ENCODE measurements at regions of chr2 and their contacts with region 1.

Region 1: DNA sequence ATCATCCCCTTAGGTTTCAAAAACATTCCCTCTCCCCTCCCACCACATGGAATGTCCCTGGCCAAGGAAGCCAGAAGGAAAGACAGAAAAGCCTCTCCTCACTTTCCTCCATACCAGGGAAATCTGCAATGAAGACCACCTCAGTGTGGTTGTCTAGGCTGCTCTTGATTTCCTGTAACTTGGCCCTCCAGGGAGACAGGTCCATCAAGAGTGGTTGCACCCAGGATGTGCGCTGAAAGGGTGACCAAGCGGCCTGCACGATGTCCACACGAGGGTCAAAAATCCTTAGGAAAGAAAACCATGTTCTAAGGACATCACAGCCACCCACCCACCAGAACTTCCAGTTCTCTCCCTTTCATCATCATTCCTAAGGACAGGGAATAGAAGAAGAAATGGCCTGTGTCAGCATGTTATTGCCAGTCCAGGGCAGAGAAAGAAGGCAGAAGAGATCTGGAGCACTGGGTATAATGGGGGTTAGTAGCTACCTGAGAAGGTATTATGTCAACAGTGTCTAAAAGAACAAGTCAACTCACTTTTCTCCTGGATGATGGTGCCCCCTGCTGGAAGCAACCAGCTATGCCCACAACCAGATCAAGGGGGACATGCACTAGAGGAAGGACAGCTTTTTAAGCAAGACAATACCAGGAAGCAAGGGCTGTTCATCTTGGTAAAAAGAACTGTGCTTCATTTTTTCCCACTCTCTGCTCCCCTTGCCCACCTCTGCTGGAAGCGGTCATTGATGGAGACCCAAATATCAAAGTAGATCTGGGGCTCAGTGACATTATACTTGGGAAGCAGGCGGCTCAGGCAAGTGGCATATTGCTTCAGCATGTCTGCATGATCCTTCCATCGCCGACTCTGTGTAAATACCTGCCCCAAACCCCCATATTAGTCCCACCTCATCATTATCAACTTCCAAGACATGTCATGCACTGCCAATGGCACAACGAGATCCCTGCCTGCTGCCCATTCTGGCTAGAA is 9.3 kb downstream of the GGCX start:
- DNase-seq: peak; percentile 78 to 92 (median 89)
- ATAC-seq: peak; percentile 91
- H3K4me3 ChIP-seq: no peak overlapping the region
- H3K4me1 ChIP-seq: no peaks in the 10 kb centered on the region
- CTCF ChIP-seq: peak; percentile 79

Region 2: DNA sequence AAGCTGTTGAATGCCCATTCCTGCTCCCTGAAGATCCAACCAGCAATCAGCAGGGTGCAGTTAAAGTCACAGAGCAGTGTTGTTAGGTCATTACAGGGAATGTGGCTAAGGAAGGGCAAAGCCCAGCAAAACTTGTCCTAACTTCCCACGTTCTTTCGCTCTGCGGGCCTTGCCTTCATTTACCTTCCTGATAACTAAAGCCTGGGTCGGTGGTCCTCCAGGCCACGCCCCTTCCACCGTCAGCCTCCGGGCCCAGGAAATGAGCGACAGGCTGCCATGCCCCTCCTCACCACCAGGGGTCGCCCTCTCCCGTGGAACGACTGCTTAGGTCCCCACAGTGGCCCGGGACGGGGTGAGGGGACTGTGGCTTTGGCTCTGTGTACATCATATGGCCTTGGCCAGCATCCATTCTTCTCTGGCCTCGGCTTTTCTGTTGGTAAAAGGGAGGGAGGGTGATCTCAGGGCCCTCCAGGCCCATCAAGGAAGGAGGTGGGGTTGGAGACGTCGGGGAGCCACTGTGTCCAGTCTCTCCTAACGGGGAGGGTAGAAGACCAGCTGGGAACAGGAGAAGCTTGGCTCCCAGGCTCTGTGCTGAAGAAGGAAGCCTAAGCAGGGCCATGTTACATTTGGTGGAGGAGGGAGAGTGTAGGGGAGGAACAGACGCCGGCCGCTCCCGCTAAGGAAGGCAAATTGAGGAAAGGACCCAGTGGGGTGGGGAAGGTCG is 131.3 kb before region 1 on chr2:
- intact Hi-C with region 1: loop called (anchors 1 to 5 kb)
- DNase-seq: peak; percentile 93 to 96 (median 94)
- ATAC-seq: peak; percentile 84
- H3K4me3 ChIP-seq: no peak overlapping the region
- H3K4me1 ChIP-seq: peaks cover 31% of the 10 kb centered on the region
- CTCF ChIP-seq: peak; percentile 99

Region 3: DNA sequence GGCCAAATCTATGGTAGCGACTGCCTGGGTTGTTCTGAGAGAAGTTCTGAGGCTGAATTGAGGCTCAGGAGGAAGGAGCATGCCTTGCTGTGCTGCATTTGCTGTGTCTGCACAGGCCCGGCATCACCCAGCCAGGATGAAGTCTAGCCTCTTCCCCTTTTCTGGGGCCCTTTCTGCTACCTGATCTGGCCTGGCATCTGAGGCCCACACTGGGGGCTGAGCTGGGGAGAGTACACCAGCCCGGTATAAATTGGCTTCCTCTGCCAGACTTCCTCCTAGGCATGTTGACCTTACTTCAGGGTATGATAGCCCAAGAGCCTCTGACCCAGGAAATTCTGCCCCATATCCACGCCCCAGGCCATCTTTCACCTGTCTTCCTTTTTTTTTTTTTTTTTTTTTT is 677.2 kb after region 1 on chr2:
- intact Hi-C with region 1: no loop called
- DNase-seq: no peak
- ATAC-seq: peak; percentile 52
- H3K4me3 ChIP-seq: no peak overlapping the region
- H3K4me1 ChIP-seq: no peaks in the 10 kb centered on the region
- CTCF ChIP-seq: no peak

Measured in mucosa of descending colon (tissue), 3 donors.